AG04449 (cell line): ENCODE measurements at regions of chr2 and their contacts with region 1.

Region 1: DNA sequence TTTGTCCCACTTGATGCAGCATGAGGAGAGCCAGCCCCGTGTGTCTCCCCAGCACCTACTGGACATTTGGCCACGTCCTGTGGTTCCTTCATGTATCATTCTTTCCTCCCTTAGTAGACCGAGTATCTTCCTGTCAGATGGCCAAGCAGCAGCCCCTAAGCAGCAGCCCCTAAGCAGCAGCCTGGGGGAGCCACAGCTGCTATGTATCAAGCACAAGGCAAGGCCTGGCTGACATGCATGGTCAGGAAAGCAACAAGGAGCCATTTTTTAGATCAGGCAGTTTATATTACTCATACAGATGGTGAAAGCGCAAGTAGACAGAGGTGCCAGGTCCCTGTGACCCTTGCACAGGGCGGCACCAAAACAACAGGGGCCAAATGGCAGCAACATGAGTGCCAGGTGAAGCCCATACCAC is 22.1 kb downstream of the CHCHD5 start:
- DNase-seq: no peak
- H3K4me3 ChIP-seq: no peak overlapping the region
- CTCF ChIP-seq: no peak

Region 2: DNA sequence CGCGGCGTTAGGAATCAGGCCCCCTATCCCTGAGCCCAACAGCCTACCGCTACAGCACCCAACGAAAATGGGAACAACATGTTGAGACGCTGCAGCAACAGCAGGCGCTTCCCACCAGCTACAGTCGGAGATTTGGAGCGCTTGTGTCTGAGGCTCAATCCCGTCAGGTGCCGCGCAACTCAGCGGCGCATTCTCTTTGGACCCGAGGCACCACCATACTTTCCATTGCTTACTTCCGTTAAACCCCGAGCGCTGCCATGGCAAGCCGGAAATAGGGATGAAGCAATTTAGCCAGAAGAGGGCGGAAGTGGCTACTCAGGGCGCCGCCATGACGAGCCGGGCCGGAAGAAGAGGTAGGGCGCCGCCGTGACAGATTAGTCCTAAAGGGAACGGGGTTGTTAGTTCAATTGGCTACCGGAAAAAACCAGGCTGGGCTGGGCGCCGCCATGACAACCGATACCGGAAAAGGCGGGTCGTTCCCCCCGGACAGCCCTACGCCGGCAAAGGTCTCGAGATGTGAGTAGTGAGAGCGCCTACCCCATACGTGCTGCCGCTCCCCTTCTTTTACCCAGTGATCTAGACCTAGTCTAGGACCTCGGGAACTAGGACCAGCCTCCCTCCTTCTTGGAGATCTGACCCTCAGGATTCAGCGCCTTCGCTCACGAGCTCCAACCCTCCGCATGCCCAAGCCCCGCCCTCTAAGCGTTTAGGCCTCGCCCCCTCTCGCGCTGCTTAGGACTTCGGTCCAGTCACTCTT is 22.2 kb before region 1 on chr2 and contains the start of gene CHCHD5:
- CTCF ChIA-PET with region 1: interaction called, 116 read pairs
- POLR2A ChIA-PET with region 1: no interaction called
- DNase-seq: no peak
- H3K4me3 ChIP-seq: peak within 1 kb of the TSS; percentile 89
- CTCF ChIP-seq: peak; percentile 13

Region 3: DNA sequence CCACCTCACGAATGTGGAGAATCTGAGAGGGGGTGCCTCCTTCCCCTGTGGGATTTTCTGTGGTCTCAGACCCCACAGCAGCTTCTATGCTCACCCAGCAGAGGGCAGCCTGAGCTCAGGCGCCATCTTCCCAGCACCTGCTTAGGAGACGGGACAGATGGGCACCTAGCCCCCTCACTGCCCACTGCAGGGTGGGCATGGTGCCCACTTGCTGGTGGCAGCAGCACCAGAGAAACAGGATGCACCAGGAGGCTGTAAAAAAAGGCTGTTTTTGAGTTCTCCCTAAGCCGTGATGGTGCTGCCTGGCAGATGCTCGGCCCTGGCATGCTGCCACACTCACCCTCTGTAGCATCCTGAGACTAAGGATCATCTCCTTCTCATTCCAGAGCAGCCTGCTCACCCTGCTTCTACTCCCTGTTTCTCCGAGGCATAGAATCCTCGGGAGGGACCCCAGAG is 20.1 kb after region 1 on chr2:
- CTCF ChIA-PET with region 1: interaction called, 58 read pairs
- POLR2A ChIA-PET with region 1: no interaction called
- DNase-seq: no peak
- H3K4me3 ChIP-seq: peak overlapping the region; percentile 9
- CTCF ChIP-seq: peak; percentile 91

Region 4: GRCh38 chr2:112692496-112692911 is 86.0 kb after region 1 on chr2:
- CTCF ChIA-PET with region 1: interaction called, 34 read pairs
- POLR2A ChIA-PET with region 1: no interaction called
- DNase-seq: peak; percentile 63
- H3K4me3 ChIP-seq: no peak overlapping the region
- CTCF ChIP-seq: no peak

Region 5: GRCh38 chr2:112733456-112733855 is 127.0 kb after region 1 on chr2:
- CTCF ChIA-PET with region 1: interaction called, 410 read pairs
- POLR2A ChIA-PET with region 1: no interaction called
- DNase-seq: no peak
- H3K4me3 ChIP-seq: no peak overlapping the region
- CTCF ChIP-seq: no peak